Heart right ventricle (tissue), 16 donors: ENCODE measurements at regions of chr21 and their contacts with region 1.

Region 1: GRCh38 chr21:38494703-38495102 is 3.6 kb downstream of the ERG start:
- DNase-seq: no peak
- ATAC-seq: peak in 4 of 8 donors; percentile 10 to 32 (median 18)
- H3K4me3 ChIP-seq: peak overlapping the region in 9 of 10 donors; percentile 18 to 64 (median 54)
- H3K27ac ChIP-seq: peak overlapping the region in 9 of 10 donors; percentile 13 to 95 (median 85)
- H3K4me1 ChIP-seq: peaks cover 0 to 58% (median 35%) of the 10 kb centered on the region in 9 donors
- H3K27me3 ChIP-seq: no peaks in the 10 kb centered on the region
- CTCF ChIP-seq: peak in 2 of 9 donors; percentile 5 to 16

Region 2: GRCh38 chr21:38380481-38381137 is 114.1 kb before region 1 on chr21:
- intact Hi-C with region 1: loop called in 1 of 10 experiments (anchors 5 kb)
- DNase-seq: no peak
- ATAC-seq: no peak
- H3K4me3 ChIP-seq: no peak overlapping the region
- H3K27ac ChIP-seq: no peak overlapping the region
- H3K4me1 ChIP-seq: peaks cover 0 to 31% (median 13%) of the 10 kb centered on the region in 9 donors
- H3K27me3 ChIP-seq: no peaks in the 10 kb centered on the region
- CTCF ChIP-seq: peak in 6 of 9 donors; percentile 10 to 39 (median 27)

Region 3: DNA sequence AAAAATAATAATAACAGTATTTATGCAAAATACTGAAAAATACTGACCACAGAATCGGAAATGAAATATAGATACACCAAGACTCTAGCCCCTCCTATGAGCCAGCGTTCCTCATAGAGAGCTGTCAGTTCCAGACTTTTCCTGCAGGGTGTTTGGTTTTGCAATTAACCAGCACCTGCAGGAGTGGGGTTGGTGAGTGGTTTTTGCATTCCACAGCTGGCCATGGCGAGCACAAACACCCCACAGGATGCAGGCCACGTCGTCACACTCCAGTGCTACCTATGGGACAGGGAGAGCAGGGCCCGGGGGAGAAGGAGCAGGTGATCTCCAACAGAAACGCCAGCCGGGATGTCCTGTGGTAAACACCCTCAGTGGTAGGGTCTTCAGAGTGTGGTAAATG is 90.5 kb before region 1 on chr21:
- intact Hi-C with region 1: loop called in 2 of 10 experiments (anchors 10 kb)
- DNase-seq: no peak
- ATAC-seq: no peak
- H3K4me3 ChIP-seq: no peak overlapping the region
- H3K27ac ChIP-seq: no peak overlapping the region
- H3K4me1 ChIP-seq: peaks cover 0 to 16% (median 5%) of the 10 kb centered on the region in 9 donors
- H3K27me3 ChIP-seq: no peaks in the 10 kb centered on the region
- CTCF ChIP-seq: peak in 1 of 9 donors; percentile 16

Region 4: GRCh38 chr21:38440746-38441145 is 54.0 kb before region 1 on chr21:
- intact Hi-C with region 1: loop called in 2 of 10 experiments (anchors 5 kb)
- DNase-seq: no peak
- ATAC-seq: no peak
- H3K4me3 ChIP-seq: no peak overlapping the region
- H3K27ac ChIP-seq: no peak overlapping the region
- H3K4me1 ChIP-seq: peaks cover 0 to 52% (median 27%) of the 10 kb centered on the region in 9 donors
- H3K27me3 ChIP-seq: no peaks in the 10 kb centered on the region
- CTCF ChIP-seq: no peak

Region 5: DNA sequence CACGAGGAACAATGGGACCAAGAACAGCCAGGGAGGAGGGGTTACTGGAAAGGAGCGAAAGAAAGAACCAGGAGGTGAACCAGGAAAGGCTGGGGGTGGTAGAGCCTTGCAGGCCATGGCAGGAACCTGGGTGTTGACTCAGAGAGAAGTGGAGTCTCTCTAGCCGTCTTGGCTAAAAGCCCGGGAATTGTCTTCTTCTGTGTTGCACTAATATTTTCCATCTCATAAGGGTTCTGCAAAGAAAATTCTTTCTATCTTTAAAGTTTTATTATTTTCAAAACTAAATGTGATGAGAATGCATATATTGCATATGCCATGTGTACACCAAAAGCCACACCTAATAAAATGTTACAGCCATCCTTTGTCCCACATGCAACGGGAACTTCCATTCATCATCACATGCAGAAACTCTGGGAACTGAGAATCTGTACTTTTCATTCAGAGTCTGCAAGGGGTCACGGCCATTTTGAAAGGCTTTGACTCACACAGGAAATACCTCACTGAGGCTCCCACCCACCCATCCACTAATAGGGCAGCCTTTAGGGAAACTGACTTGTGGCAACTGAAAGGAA is 34.4 kb before region 1 on chr21:
- intact Hi-C with region 1: loop called in 1 of 10 experiments (anchors 5 kb)
- DNase-seq: peak in 1 of 2 donors; percentile 56
- ATAC-seq: peak; percentile 45 to 84 (median 72)
- H3K4me3 ChIP-seq: no peak overlapping the region
- H3K27ac ChIP-seq: peak overlapping the region; percentile 35 to 85 (median 68)
- H3K4me1 ChIP-seq: peaks cover 0 to 63% (median 23%) of the 10 kb centered on the region in 9 donors
- H3K27me3 ChIP-seq: no peaks in the 10 kb centered on the region
- CTCF ChIP-seq: no peak